Ovary (tissue), 10 donors: ENCODE measurements at regions of chr17 and their contacts with region 1.

Region 1: GRCh38 chr17:81512560-81513371 is at the start of gene ACTG1:
- DNase-seq: peak; percentile 94 to 97 (median 95)
- H3K4me3 ChIP-seq: peak within 1 kb of the TSS; percentile 93
- H3K27ac ChIP-seq: peak within 1 kb of the TSS; percentile 98 to 100
- H3K4me1 ChIP-seq: peaks cover 14% of the 10 kb centered on the region
- H3K27me3 ChIP-seq: no peaks in the 10 kb centered on the region
- CTCF ChIP-seq: no peak
- EP300 ChIP-seq: no peak
- POLR2A ChIP-seq: peak; percentile 77
- total RNA-seq, gene ACTG1: 3,016 to 5,681 (median 4,174) TPM

Region 2: GRCh38 chr17:81401723-81402529 is 110.8 kb before region 1 on chr17:
- intact Hi-C with region 1: loop called in 3 of 4 experiments (anchors 2 to 5 kb)
- DNase-seq: peak in 1 of 5 donors; percentile 58
- H3K4me3 ChIP-seq: no peak overlapping the region
- H3K27ac ChIP-seq: peak overlapping the region; percentile 4 to 37
- H3K4me1 ChIP-seq: peaks cover 30% of the 10 kb centered on the region
- H3K27me3 ChIP-seq: no peaks in the 10 kb centered on the region
- CTCF ChIP-seq: no peak
- EP300 ChIP-seq: no peak
- POLR2A ChIP-seq: no peak